ENCODE measurements at regions of chr4 and their contacts with region 1.

Region 1: GRCh38 chr4:9762823-9763475 is 18.5 kb upstream of the DRD5 start:
- DNase-seq: peak; percentile 72
- ATAC-seq: no peak
- H3K4me3 ChIP-seq: no peak overlapping the region
- H3K27ac ChIP-seq: no peak overlapping the region
- H3K4me1 ChIP-seq: no peaks in the 10 kb centered on the region
- H3K27me3 ChIP-seq: no peaks in the 10 kb centered on the region
- CTCF ChIP-seq: peak; percentile 60

Region 2: GRCh38 chr4:10403633-10404445 is 640.9 kb after region 1 on chr4:
- CTCF ChIA-PET with region 1: no interaction called
- POLR2A ChIA-PET with region 1: no interaction called
- intact Hi-C with region 1: loop called (anchors 10 kb)
- DNase-seq: peak; percentile 48
- ATAC-seq: peak; percentile 55
- H3K4me3 ChIP-seq: no peak overlapping the region
- H3K27ac ChIP-seq: no peak overlapping the region
- H3K4me1 ChIP-seq: no peaks in the 10 kb centered on the region
- H3K27me3 ChIP-seq: no peaks in the 10 kb centered on the region
- CTCF ChIP-seq: peak; percentile 61

Region 3: GRCh38 chr4:10530137-10530786 is 767.3 kb after region 1 on chr4:
- CTCF ChIA-PET with region 1: no interaction called
- POLR2A ChIA-PET with region 1: no interaction called
- intact Hi-C with region 1: loop called (anchors 10 kb)
- DNase-seq: no peak
- ATAC-seq: no peak
- H3K4me3 ChIP-seq: no peak overlapping the region
- H3K27ac ChIP-seq: no peak overlapping the region
- H3K4me1 ChIP-seq: peaks cover 17% of the 10 kb centered on the region; the same call in 1 of the 2 replicates
- H3K27me3 ChIP-seq: peaks cover 12% of the 10 kb centered on the region; the same call in 1 of the 2 replicates
- CTCF ChIP-seq: no peak

Measured in PC-3 (cell line).